PC-3 (cell line): ENCODE measurements at regions of chr12 and their contacts with region 1.

Region 1: GRCh38 chr12:87344699-87345098 is 684.5 kb downstream of the C12orf50 start:
- DNase-seq: peak; percentile 55
- ATAC-seq: no peak
- H3K4me3 ChIP-seq: no peak overlapping the region
- H3K27ac ChIP-seq: no peak overlapping the region
- H3K4me1 ChIP-seq: peaks cover 25% of the 10 kb centered on the region
- H3K27me3 ChIP-seq: no peaks in the 10 kb centered on the region
- CTCF ChIP-seq: peak; percentile 72

Region 2: GRCh38 chr12:86735851-86736250 is 608.8 kb before region 1 on chr12:
- CTCF ChIA-PET with region 1: no interaction called
- POLR2A ChIA-PET with region 1: no interaction called
- intact Hi-C with region 1: loop called (anchors 10 kb)
- DNase-seq: no peak
- ATAC-seq: no peak
- H3K4me3 ChIP-seq: no peak overlapping the region
- H3K27ac ChIP-seq: no peak overlapping the region
- H3K4me1 ChIP-seq: no peaks in the 10 kb centered on the region
- H3K27me3 ChIP-seq: no peaks in the 10 kb centered on the region
- CTCF ChIP-seq: no peak

Region 3: GRCh38 chr12:87157791-87158190 is 186.9 kb before region 1 on chr12:
- CTCF ChIA-PET with region 1: no interaction called
- POLR2A ChIA-PET with region 1: no interaction called
- intact Hi-C with region 1: loop called (anchors 1 kb)
- DNase-seq: peak; percentile 95
- ATAC-seq: peak; percentile 78
- H3K4me3 ChIP-seq: no peak overlapping the region
- H3K27ac ChIP-seq: peak overlapping the region; percentile 67
- H3K4me1 ChIP-seq: peaks cover 30% of the 10 kb centered on the region
- H3K27me3 ChIP-seq: no peaks in the 10 kb centered on the region
- CTCF ChIP-seq: no peak

Region 4: GRCh38 chr12:87246726-87247125 is 98.0 kb before region 1 on chr12:
- CTCF ChIA-PET with region 1: no interaction called
- POLR2A ChIA-PET with region 1: no interaction called
- intact Hi-C with region 1: loop called (anchors 1 kb)
- DNase-seq: no peak
- ATAC-seq: no peak
- H3K4me3 ChIP-seq: no peak overlapping the region
- H3K27ac ChIP-seq: 0 out of 2 replicates have a peak overlapping the region, but pooled peaks have one; percentile 60
- H3K4me1 ChIP-seq: peaks cover 16% of the 10 kb centered on the region
- H3K27me3 ChIP-seq: no peaks in the 10 kb centered on the region
- CTCF ChIP-seq: no peak

Region 5: DNA sequence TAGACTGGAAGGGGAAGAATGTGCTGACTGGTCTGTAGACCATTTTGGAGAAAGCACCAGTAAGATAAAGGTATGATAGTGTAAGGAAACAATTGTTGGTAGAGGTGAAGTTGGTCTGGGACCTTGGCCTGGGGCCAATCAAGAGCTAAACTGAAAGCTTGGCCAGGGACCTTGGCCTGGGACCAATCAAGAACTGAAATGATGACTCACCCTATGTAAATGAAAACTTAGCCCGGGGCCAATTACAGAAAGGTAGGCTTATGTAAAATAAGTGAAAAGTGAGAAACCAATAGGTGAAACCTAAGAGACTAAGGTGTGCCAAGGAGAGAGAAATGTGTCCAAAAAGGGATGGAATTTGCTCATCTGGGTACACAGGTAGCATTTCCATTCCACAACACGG is 91.5 kb before region 1 on chr12:
- CTCF ChIA-PET with region 1: no interaction called
- POLR2A ChIA-PET with region 1: no interaction called
- intact Hi-C with region 1: loop called (anchors 1 kb)
- DNase-seq: peak; percentile 80
- ATAC-seq: peak; percentile 32; the same call in 1 of the 2 replicates
- H3K4me3 ChIP-seq: no peak overlapping the region
- H3K27ac ChIP-seq: 0 out of 2 replicates have a peak overlapping the region, but pooled peaks have one; percentile 10
- H3K4me1 ChIP-seq: peaks cover 4% of the 10 kb centered on the region
- H3K27me3 ChIP-seq: no peaks in the 10 kb centered on the region
- CTCF ChIP-seq: no peak

Region 6: DNA sequence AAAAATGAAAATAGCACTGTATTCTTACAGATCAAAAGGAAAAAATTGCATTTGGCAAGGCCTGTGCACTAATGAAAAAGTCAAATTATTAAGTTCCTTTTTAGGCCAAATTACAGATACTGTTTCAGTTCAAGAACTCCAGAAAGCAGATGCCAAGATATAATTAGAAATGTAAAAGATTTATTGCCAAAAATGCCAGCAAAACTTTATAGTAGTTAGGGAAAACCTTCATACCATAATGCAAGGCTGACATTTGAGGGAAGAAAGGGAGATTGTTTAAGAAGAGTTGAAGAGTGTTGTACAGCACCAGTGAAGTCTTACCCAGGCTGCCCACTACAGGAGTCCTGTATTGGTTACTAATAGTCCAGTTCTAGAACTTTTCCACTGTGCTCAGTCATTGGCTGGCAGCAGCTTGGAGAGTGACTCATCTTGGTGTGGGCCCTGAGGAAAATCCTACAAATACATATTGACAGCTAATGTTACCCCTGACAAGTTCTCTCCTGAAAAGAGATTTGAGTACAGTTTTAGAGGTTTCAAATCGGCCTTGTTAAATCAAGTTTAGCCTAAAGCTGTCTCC is 84.1 kb after region 1 on chr12:
- CTCF ChIA-PET with region 1: no interaction called
- POLR2A ChIA-PET with region 1: no interaction called
- intact Hi-C with region 1: loop called (anchors 2 kb)
- DNase-seq: peak; percentile 39
- ATAC-seq: peak; percentile 60
- H3K4me3 ChIP-seq: no peak overlapping the region
- H3K27ac ChIP-seq: peak overlapping the region; percentile 47
- H3K4me1 ChIP-seq: peaks cover 16% of the 10 kb centered on the region
- H3K27me3 ChIP-seq: no peaks in the 10 kb centered on the region
- CTCF ChIP-seq: no peak

Region 7: DNA sequence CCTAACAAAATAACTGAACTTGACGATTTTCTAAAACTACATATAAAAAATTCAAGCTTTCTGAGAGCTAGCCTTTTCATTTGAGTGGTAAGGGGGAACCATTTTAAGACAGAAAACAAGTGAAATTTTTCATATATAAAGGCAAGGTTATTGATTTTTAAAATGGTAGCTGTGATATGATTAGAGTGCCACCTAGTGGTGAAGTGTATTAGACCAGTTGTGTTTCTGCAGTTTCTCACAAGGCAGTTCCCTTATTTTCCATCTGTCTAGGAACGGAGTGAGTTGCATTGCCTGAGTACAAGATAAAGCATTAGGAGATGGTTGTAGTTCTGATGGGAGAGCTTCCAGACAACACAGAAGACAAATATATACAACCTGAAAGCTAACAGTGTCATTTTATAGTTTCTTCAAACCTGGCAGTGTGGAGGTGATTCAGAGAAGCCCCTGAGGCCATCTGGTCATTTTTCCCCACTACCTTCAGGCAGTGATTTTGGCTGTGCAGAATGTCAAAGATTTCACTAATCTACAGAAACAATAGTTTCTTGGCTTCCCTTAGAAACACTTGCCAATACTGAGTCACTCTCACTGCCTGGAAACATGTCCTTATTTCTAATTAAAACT is 503.7 kb after region 1 on chr12:
- CTCF ChIA-PET with region 1: no interaction called
- POLR2A ChIA-PET with region 1: no interaction called
- intact Hi-C with region 1: loop called (anchors 2 kb)
- DNase-seq: peak; percentile 78
- ATAC-seq: peak; percentile 60
- H3K4me3 ChIP-seq: no peak overlapping the region
- H3K27ac ChIP-seq: no peak overlapping the region
- H3K4me1 ChIP-seq: no peaks in the 10 kb centered on the region
- H3K27me3 ChIP-seq: no peaks in the 10 kb centered on the region
- CTCF ChIP-seq: peak; percentile 93